ENCODE measurements at regions of chr16 and their contacts with region 1.

Region 1: DNA sequence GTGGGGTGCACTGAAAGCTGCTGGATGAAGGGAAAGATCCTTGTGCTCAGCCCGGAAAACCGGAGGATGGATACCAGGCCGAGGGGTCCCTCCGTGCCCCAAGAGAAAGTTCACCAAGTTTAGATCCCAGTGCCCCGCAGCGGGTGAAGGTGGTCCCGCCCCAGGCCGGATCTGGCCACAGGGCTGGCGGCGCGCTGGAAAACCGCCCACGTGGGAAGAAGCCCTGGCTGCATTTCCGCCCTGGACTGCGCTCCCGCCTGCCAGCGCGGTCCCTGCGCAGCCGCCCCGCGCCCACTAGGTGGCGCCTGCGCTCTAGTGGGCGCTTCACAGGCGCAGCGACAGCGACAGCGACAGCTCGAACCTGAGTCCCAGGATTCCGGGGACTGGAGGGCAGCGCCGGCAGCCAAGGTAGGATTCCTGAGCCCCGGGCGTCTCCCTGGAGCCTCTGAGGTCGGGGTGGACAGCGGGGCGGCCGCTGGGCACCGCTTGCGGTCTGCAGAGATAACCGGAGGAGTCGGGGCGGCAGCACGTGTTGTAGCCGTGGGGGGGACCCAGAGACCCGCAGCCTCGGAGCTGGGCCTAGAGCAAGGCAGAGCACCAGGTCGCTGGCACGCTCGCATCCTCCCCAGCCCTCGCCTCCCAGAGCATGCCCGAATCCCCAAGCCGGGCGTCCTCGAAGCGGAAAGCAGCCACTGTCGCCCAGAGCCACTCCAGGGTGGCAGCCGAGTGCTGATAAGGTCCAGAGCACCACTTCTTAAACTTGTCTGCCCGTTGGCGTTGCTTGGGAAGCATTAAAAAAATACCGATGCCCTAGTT is at the start of gene CHD9:
- DNase-seq: peak; percentile 43 to 89 (median 64)
- ATAC-seq: peak; percentile 94
- H3K4me3 ChIP-seq: peak within 1 kb of the TSS; percentile 69
- H3K4me3 Mint-ChIP-seq: peak within 1 kb of the TSS; percentile 81
- H3K27ac ChIP-seq: no peak within 1 kb of the TSS
- H3K27ac Mint-ChIP-seq: no peak within 1 kb of the TSS
- H3K4me1 ChIP-seq: peaks cover 24% of the 10 kb centered on the region
- H3K4me1 Mint-ChIP-seq: peaks cover 7% of the 10 kb centered on the region
- H3K27me3 ChIP-seq: no peaks in the 10 kb centered on the region
- H3K27me3 Mint-ChIP-seq: no peaks in the 10 kb centered on the region
- CTCF ChIP-seq: peak; percentile 100
- total RNA-seq, gene CHD9: 28.2 to 28.8 TPM

Region 2: DNA sequence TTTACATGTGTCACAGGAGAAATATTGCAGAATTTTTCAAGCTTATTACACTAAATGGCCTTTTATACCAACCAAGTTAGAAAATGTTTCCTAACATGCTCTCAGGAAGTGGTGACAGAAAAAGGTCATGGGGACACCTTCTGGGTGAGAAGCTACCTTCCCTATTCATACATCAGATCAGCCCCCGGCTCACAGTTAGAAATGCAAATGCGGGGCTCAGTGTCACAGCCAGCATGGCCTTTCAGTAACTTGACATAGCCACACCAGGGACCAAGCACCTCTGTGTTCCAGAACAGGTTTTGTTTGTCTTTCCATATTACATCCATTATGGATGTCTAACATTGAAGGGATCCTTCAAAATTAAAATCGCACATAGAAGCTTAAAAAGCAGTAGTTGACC is 61.7 kb before region 1 on chr16:
- CTCF ChIA-PET with region 1: no interaction called
- POLR2A ChIA-PET with region 1: no interaction called
- intact Hi-C with region 1: no loop called
- DNase-seq: no peak
- ATAC-seq: no peak
- H3K4me3 ChIP-seq: no peak overlapping the region
- H3K4me3 Mint-ChIP-seq: no peak overlapping the region
- H3K27ac ChIP-seq: no peak overlapping the region
- H3K27ac Mint-ChIP-seq: no peak overlapping the region
- H3K4me1 ChIP-seq: no peaks in the 10 kb centered on the region
- H3K4me1 Mint-ChIP-seq: no peaks in the 10 kb centered on the region
- H3K27me3 ChIP-seq: peaks cover 0 to 2% of the 10 kb centered on the region in 2 experiments
- H3K27me3 Mint-ChIP-seq: peaks cover 4% of the 10 kb centered on the region
- CTCF ChIP-seq: no peak

Region 3: GRCh38 chr16:53159781-53160436 is 105.0 kb after region 1 on chr16:
- CTCF ChIA-PET with region 1: interaction called, 19 read pairs
- POLR2A ChIA-PET with region 1: interaction called, 4 read pairs
- intact Hi-C with region 1: loop called (anchors 1 kb)
- DNase-seq: peak in 4 of 14 experiments; percentile 31 to 76 (median 70)
- ATAC-seq: peak; percentile 68
- H3K4me3 ChIP-seq: no peak overlapping the region
- H3K4me3 Mint-ChIP-seq: no peak overlapping the region
- H3K27ac ChIP-seq: no peak overlapping the region
- H3K27ac Mint-ChIP-seq: no peak overlapping the region
- H3K4me1 ChIP-seq: no peaks in the 10 kb centered on the region
- H3K4me1 Mint-ChIP-seq: peaks cover 6% of the 10 kb centered on the region
- H3K27me3 ChIP-seq: no peaks in the 10 kb centered on the region
- H3K27me3 Mint-ChIP-seq: no peaks in the 10 kb centered on the region
- CTCF ChIP-seq: peak; percentile 80

Region 4: DNA sequence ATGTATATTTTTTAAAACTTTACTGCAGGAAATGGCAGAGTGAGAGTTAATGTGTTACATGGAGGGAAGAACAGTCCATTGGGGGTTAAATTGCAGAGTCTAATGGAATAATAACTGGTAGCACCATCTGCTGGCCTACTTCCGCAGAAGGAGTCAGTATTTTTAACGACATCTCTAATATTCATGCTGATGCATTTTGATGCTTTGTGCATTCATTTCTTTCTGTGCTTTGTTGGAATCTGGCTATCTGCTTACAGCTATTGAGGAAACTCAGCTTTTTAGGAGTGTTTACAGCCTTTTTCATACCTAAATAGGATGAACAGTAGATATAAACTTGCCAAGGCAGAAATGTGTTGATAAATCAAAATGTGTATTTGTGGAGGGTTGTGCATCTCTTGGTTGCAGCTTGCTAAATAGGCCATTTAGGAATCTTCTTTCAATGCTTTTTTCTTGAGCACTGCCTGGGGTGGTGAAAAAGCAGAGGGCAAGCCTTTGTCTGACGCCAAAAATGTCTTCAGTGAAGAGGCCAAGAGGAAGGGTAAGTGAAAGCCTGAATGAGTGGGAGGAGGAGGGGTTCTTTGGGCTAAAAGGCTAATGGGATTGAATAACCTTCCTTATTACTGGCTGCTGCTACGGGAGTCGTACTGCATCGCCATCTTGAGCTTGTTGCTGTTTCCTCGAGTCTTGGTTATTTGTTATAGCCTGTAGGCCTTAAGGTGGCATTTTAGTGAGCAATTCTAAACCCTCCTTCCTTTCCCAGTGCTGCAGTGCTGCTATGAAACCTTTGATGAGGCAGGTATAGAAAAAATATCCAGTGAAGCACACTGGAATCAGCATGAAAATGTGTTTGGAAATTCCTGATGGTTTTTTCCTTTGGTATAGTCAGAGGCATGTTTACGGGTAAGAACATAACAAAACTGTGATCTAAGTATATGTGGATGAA is 153.2 kb after region 1 on chr16:
- CTCF ChIA-PET with region 1: interaction called, 5 read pairs
- POLR2A ChIA-PET with region 1: interaction called, 6 read pairs
- intact Hi-C with region 1: loop called (anchors 1 kb)
- DNase-seq: peak in 4 of 14 experiments; percentile 19 to 52 (median 40)
- ATAC-seq: peak; percentile 68
- H3K4me3 ChIP-seq: peak overlapping the region; percentile 12
- H3K4me3 Mint-ChIP-seq: peak overlapping the region; percentile 82
- H3K27ac ChIP-seq: no peak overlapping the region
- H3K27ac Mint-ChIP-seq: peak overlapping the region; percentile 82
- H3K4me1 ChIP-seq: no peaks in the 10 kb centered on the region
- H3K4me1 Mint-ChIP-seq: peaks cover 33% of the 10 kb centered on the region
- H3K27me3 ChIP-seq: no peaks in the 10 kb centered on the region
- H3K27me3 Mint-ChIP-seq: no peaks in the 10 kb centered on the region
- CTCF ChIP-seq: peak; percentile 53

Region 5: GRCh38 chr16:53282975-53283946 is 228.4 kb after region 1 on chr16:
- CTCF ChIA-PET with region 1: interaction called, 7 read pairs
- POLR2A ChIA-PET with region 1: interaction called, 6 read pairs
- intact Hi-C with region 1: loop called (anchors 2 kb)
- DNase-seq: peak in 3 of 14 experiments; percentile 38 to 50 (median 44)
- ATAC-seq: no peak
- H3K4me3 ChIP-seq: no peak overlapping the region
- H3K4me3 Mint-ChIP-seq: no peak overlapping the region
- H3K27ac ChIP-seq: no peak overlapping the region
- H3K27ac Mint-ChIP-seq: no peak overlapping the region
- H3K4me1 ChIP-seq: no peaks in the 10 kb centered on the region
- H3K4me1 Mint-ChIP-seq: no peaks in the 10 kb centered on the region
- H3K27me3 ChIP-seq: no peaks in the 10 kb centered on the region
- H3K27me3 Mint-ChIP-seq: no peaks in the 10 kb centered on the region
- CTCF ChIP-seq: peak; percentile 56

Region 6: GRCh38 chr16:53404959-53405358 is 350.1 kb after region 1 on chr16:
- CTCF ChIA-PET with region 1: no interaction called
- POLR2A ChIA-PET with region 1: no interaction called
- intact Hi-C with region 1: loop called in 1 of 2 experiments (anchors 10 kb)
- DNase-seq: no peak
- ATAC-seq: no peak
- H3K4me3 ChIP-seq: no peak overlapping the region
- H3K4me3 Mint-ChIP-seq: no peak overlapping the region
- H3K27ac ChIP-seq: no peak overlapping the region
- H3K27ac Mint-ChIP-seq: no peak overlapping the region
- H3K4me1 ChIP-seq: no peaks in the 10 kb centered on the region
- H3K4me1 Mint-ChIP-seq: peaks cover 6% of the 10 kb centered on the region
- H3K27me3 ChIP-seq: no peaks in the 10 kb centered on the region
- H3K27me3 Mint-ChIP-seq: no peaks in the 10 kb centered on the region
- CTCF ChIP-seq: no peak

Region 7: DNA sequence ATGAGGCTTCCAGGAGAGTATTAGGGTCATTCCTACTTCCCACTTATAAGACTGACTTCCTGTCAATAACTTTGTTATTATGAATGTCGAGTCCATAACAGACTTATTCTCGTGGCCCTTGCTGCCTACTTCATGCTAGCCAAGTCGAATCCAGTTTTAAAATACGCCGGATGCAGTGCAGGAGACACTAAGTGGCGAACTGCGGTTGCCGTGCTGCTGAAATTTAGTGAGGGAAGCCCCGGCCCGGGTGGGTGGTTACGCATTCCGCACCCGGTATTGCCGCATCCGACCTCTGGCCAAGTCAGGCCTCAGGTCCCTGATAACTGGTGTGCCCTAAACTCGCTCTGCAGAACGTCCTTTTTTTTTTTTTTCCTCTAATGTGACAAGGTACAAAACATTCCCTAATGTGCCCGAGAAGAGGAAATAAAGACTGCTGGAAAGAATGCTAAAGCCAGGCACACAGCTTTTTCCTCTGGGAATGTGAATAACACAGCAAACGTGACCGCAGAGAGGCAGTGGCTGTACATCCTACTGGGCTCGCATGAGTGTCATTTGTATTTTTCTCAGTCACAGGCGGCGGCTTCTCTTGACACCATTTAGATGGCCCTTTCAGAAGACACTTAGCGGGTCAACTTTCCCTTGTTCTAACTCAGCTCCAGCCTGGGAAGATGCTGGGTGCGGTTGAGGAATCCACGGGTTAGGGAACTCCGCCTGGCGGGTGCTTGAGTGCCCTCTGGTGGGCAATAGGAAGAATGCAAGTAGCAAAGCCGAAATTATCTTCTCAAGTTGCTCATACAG is 455.2 kb after region 1 on chr16:
- CTCF ChIA-PET with region 1: no interaction called
- POLR2A ChIA-PET with region 1: no interaction called
- intact Hi-C with region 1: loop called (anchors 1 to 2 kb)
- DNase-seq: peak in 13 of 14 experiments; percentile 17 to 83 (median 36)
- ATAC-seq: peak; percentile 71
- H3K4me3 ChIP-seq: peak overlapping the region; percentile 33
- H3K4me3 Mint-ChIP-seq: peak overlapping the region; percentile 72
- H3K27ac ChIP-seq: no peak overlapping the region
- H3K27ac Mint-ChIP-seq: peak overlapping the region; percentile 11
- H3K4me1 ChIP-seq: peaks cover 28% of the 10 kb centered on the region
- H3K4me1 Mint-ChIP-seq: peaks cover 35% of the 10 kb centered on the region
- H3K27me3 ChIP-seq: no peaks in the 10 kb centered on the region
- H3K27me3 Mint-ChIP-seq: no peaks in the 10 kb centered on the region
- CTCF ChIP-seq: peak; percentile 97

Measured in CD4-positive, alpha-beta T cell (primary cell).